Right ventricle myocardium inferior (tissue), 1 donor: ENCODE measurements at regions of chr3 and their contacts with region 1.

Region 1: GRCh38 chr3:27134165-27134796 is 234.9 kb downstream of the NEK10 start:
- DNase-seq: peak; percentile 68
- ATAC-seq: peak; percentile 56

Region 2: DNA sequence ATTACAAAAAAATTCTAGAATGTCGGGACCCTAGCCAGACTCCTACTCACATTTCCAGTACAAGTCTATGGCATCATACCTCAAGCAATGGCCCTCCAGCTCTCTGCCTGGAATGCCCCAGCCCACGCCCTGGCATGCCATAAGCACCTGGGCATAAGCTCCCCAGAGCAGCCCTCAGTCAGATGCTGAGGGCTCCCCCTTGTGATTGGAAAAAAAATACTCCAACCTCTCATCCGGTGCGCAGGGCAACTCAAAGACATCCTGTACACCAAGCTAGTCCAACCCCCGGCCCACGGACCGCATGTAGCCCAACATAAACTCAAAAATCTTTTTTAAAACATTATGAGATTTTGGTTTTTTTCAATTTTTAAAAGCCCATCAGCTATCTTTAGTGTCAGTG is 119.5 kb after region 1 on chr3:
- intact Hi-C with region 1: loop called (anchors 5 kb)
- DNase-seq: no peak
- ATAC-seq: peak; percentile 64

Region 3: DNA sequence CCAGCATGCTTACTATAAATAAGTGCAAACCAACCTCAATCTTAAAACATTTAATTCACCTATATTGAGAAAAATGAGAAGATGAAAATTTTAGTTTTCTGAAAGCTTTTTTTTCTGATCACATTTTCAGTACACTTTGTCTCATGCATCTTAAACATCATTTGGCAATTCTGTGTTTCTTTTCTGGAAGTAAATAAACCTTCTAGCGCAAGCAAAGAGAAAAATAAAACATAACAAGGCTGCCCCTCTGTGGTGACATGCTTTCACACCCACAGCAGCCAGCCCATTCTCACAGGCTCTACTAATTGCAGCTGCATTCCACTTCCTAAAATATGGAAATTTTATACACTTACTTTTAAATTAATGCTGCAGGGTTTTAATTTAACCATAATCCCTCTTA is 144.8 kb after region 1 on chr3:
- intact Hi-C with region 1: loop called (anchors 2 kb)
- DNase-seq: no peak
- ATAC-seq: peak; percentile 44